ENCODE measurements at regions of chr19 and their contacts with region 1.

Region 1: DNA sequence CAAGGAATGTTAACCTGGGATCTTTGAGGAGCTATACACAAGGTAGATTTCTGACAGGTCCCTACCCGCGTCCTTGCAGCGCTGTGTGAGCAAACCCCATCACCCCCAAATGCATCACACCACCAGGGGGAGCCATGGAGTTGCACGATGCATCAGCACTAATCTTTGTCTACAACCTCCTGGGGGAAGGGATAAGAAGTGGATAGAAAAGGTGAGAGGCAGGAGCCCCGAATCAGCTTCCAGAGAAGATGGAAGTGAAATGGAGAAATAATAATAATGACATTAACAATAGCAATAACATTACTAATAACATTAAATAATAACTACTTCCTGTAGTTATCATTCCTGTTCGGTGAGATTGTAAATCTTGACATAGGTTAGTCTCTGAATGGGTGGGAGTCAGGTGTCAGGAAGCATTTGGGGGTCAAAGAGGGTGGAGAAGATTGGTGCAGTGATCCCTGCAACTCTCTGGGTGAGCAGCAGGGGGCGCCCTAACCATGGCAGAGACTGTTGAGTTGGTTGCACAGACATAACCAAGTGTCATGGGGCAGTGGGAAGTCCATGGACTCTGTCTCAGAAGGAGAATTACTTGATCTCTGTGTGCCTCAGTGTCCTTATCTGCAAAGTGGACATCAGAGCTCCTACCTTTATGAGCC is 16.5 kb downstream of the SIGLEC7 start:
- DNase-seq: peak; percentile 78 to 89 (median 83)
- H3K4me3 ChIP-seq: no peak overlapping the region
- H3K27ac ChIP-seq: no peak overlapping the region
- H3K4me1 ChIP-seq: peaks cover 0 to 14% (median 6%) of the 10 kb centered on the region in 4 experiments
- H3K27me3 ChIP-seq: peaks cover 0 to 3% (median 0%) of the 10 kb centered on the region in 5 experiments

Region 2: GRCh38 chr19:50933640-50934039 is 225.0 kb before region 1 on chr19:
- CTCF ChIA-PET with region 1: no interaction called
- POLR2A ChIA-PET with region 1: no interaction called
- DNase-seq: peak in 2 of 3 donors; percentile 23 to 31
- H3K4me3 ChIP-seq: no peak overlapping the region
- H3K27ac ChIP-seq: no peak overlapping the region
- H3K4me1 ChIP-seq: no peaks in the 10 kb centered on the region
- H3K27me3 ChIP-seq: peaks cover 0 to 38% (median 10%) of the 10 kb centered on the region in 5 experiments

Region 3: DNA sequence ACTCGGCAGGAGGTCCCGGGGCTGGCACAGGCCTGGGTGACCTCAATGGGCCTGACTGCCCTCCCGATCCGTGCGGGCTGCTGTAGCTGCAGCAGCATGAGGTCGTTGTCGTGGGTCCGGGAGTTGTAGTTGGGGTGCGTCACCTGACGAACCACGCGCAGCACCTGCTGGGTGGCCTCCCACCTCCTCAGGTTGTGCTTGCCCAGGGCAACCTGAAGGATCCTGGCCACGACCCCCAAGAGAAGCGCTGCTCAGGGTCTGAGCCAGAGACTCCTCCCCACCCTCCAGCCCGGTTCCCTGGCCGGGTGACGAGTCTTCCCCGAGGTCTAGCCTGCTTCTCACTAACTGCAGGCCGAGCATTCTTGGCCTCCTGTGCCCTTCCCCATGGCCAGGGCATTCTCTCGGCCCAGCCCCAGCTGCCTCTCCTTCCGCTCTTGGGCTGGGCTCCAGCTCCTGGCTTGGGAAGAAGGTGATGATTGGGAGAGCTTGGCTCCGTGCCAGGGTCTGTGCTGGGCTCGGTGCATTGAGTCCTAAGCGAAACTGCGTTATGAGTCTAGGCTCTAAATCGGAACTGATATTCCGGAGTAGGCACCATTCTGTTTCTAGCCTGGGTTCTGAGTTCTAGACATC is 79.0 kb before region 1 on chr19:
- CTCF ChIA-PET with region 1: no interaction called
- POLR2A ChIA-PET with region 1: no interaction called
- DNase-seq: no peak
- H3K4me3 ChIP-seq: no peak overlapping the region
- H3K27ac ChIP-seq: no peak overlapping the region
- H3K4me1 ChIP-seq: no peaks in the 10 kb centered on the region
- H3K27me3 ChIP-seq: peaks cover 0 to 22% (median 2%) of the 10 kb centered on the region in 5 experiments

Region 4: GRCh38 chr19:51136851-51137551 is 21.6 kb before region 1 on chr19:
- CTCF ChIA-PET with region 1: interaction called, 19 read pairs
- POLR2A ChIA-PET with region 1: no interaction called
- DNase-seq: peak; percentile 38 to 71 (median 68)
- H3K4me3 ChIP-seq: peak overlapping the region in 2 of 7 experiments; percentile 43 to 67
- H3K27ac ChIP-seq: no peak overlapping the region
- H3K4me1 ChIP-seq: peaks cover 18 to 67% (median 43%) of the 10 kb centered on the region in 4 experiments
- H3K27me3 ChIP-seq: peaks cover 0 to 15% (median 8%) of the 10 kb centered on the region in 5 experiments

Region 5: GRCh38 chr19:51147663-51148062 is 10.9 kb before region 1 on chr19:
- CTCF ChIA-PET with region 1: interaction called, 40 read pairs
- POLR2A ChIA-PET with region 1: no interaction called
- DNase-seq: peak in 2 of 3 donors; percentile 51 to 69
- H3K4me3 ChIP-seq: no peak overlapping the region
- H3K27ac ChIP-seq: no peak overlapping the region
- H3K4me1 ChIP-seq: peaks cover 3 to 22% (median 12%) of the 10 kb centered on the region in 4 experiments
- H3K27me3 ChIP-seq: no peaks in the 10 kb centered on the region

Region 6: DNA sequence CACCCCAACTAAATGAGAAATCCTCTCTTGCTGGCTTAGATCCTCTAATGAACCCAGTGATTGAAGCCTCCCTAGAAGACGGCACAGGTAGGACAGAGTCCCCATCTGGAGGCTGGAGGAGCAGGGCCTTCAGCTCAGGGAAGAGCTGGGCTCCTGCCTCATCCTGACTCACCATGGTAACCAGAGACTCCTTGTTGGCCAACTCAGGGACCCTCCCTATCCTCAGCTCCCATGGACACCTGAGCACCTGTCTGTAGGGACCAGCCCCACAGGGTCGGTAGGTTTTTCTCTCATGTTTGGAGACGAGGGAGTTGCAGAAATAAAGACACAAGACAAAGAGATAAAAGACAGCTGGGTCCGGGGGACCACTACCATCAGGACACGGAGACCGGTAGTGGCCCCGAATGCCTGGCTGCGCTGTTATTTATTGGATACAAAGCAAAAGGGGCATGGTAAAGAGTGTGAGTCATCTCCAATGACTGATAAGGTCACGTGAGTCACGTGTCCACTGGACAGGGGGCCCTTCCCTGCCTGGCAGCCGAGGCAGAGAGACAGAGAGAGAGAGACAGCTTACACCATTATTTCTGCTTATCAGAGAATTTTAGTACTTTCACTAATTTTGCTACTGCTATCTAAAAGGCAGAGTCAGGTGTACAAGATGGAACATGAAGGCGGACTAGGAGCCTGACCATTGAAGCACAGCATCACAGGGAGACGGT is 10.1 kb after region 1 on chr19:
- CTCF ChIA-PET with region 1: interaction called, 14 read pairs
- POLR2A ChIA-PET with region 1: no interaction called
- DNase-seq: no peak
- H3K4me3 ChIP-seq: no peak overlapping the region
- H3K27ac ChIP-seq: no peak overlapping the region
- H3K4me1 ChIP-seq: peaks cover 5 to 41% (median 25%) of the 10 kb centered on the region in 4 experiments
- H3K27me3 ChIP-seq: no peaks in the 10 kb centered on the region

Region 7: DNA sequence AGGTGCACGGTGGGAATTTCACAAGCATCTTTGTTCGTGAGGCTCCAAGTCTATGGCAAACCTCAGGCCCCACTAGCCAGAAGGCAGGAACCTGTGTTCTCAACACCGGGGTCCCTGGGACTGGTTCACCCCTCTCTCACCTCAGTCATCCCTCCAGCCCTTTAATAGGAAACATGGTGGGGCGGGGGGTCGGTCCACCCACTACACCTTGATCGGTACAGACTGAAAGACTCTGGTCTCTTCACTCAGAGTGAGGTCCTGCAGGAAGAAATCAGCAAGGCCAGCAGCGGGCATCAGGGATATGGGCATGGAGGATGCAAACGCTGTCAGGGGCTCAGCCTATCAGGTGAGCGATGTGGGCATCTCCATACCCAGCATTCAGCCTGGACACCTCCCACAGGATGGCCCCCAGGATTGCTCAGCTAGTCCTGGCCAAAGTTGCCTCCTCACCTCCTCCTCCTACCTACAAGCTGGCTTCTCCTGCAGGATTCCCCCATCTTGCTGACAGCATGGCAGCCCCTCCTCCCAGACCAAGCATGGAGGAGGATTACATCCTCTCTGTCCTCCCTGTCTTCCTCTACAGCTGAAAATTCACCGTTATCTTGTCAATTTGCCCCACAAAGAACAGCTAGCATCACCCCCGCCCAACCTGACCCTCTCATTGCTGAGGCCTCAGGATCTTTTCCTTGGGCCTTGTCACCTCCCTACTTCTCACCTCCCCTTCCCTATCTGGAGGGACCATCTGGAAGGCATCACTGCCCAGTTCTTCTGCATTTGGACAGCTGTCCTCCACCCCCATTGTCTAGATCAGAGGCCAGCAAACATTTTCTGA is 29.0 kb after region 1 on chr19:
- CTCF ChIA-PET with region 1: interaction called, 11 read pairs
- POLR2A ChIA-PET with region 1: no interaction called
- DNase-seq: no peak
- H3K4me3 ChIP-seq: no peak overlapping the region
- H3K27ac ChIP-seq: no peak overlapping the region
- H3K4me1 ChIP-seq: peaks cover 0 to 37% (median 28%) of the 10 kb centered on the region in 4 experiments
- H3K27me3 ChIP-seq: no peaks in the 10 kb centered on the region

Region 8: DNA sequence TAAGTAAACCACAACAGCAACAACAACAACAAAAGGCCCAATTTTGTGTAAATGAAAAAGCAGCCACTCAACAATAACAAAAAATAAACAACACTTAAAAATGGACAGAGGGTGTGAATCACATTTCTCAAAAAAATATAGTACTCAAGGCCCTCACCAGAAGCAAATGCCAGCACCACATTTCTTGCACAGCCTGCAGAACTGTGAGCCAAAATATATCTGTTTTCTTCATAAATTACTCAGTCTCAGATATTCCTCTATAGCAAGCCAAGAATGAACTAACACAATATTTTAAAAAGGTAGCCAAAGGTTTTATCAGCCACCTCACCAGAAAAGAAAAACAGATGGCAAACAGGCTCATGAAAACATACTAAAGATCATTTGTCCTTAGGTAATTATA is 62.4 kb after region 1 on chr19:
- CTCF ChIA-PET with region 1: no interaction called
- POLR2A ChIA-PET with region 1: no interaction called
- DNase-seq: no peak
- H3K4me3 ChIP-seq: no peak overlapping the region
- H3K27ac ChIP-seq: no peak overlapping the region
- H3K4me1 ChIP-seq: peaks cover 12 to 46% (median 31%) of the 10 kb centered on the region in 4 experiments
- H3K27me3 ChIP-seq: no peaks in the 10 kb centered on the region

Region 9: DNA sequence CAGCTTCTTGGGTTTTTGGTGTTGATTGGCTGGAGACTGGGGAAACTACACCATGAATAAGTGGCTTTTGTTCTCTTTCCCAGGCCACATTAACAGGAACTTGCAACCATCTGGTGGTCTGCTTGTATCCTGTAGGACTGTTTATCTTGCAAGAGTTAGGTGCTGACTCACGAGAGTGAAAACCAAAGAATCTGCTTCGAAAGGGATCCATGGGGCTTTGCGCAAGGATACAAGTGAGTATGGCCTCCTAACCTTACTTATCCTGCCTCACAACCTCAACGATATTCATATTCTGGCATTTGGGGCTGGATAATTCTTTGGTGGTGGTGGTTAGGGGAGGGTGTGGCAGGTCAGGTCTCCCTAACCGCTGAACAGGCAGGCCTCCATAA is 87.6 kb after region 1 on chr19:
- CTCF ChIA-PET with region 1: interaction called, 10 read pairs
- POLR2A ChIA-PET with region 1: no interaction called
- DNase-seq: peak; percentile 95 to 99 (median 98)
- H3K4me3 ChIP-seq: peak overlapping the region in 4 of 7 experiments; percentile 19 to 46 (median 32)
- H3K27ac ChIP-seq: peak overlapping the region in 1 of 2 experiments; percentile 59
- H3K4me1 ChIP-seq: peaks cover 18 to 80% (median 74%) of the 10 kb centered on the region in 4 experiments
- H3K27me3 ChIP-seq: no peaks in the 10 kb centered on the region

Region 10: GRCh38 chr19:51259348-51260245 is 101.0 kb after region 1 on chr19:
- CTCF ChIA-PET with region 1: interaction called, 212 read pairs
- POLR2A ChIA-PET with region 1: no interaction called
- DNase-seq: peak; percentile 67 to 80 (median 76)
- H3K4me3 ChIP-seq: no peak overlapping the region
- H3K27ac ChIP-seq: no peak overlapping the region
- H3K4me1 ChIP-seq: peaks cover 19 to 30% (median 25%) of the 10 kb centered on the region in 4 experiments
- H3K27me3 ChIP-seq: no peaks in the 10 kb centered on the region